ENCODE measurements at regions of chr1 and their contacts with region 1.

Region 1: GRCh38 chr1:155127105-155127964 is at the start of gene EFNA1:
- DNase-seq: peak; percentile 22 to 63 (median 42)
- H3K4me3 ChIP-seq: peak within 1 kb of the TSS; percentile 64
- H3K4me3 Mint-ChIP-seq: peak within 1 kb of the TSS; percentile 78 to 93 (median 89)
- H3K27ac ChIP-seq: peak within 1 kb of the TSS; percentile 55
- H3K27ac Mint-ChIP-seq: peak within 1 kb of the TSS in 6 of 8 donors; percentile 13 to 77 (median 68)
- H3K4me1 ChIP-seq: peaks cover 34% of the 10 kb centered on the region
- H3K4me1 Mint-ChIP-seq: peaks cover 23 to 30% (median 23%) of the 10 kb centered on the region in 3 donors
- H3K27me3 ChIP-seq: no peaks in the 10 kb centered on the region
- H3K27me3 Mint-ChIP-seq: peaks cover 16 to 34% of the 10 kb centered on the region in 2 donors
- total RNA-seq, gene EFNA1: 0.16 to 0.31 TPM

Region 2: DNA sequence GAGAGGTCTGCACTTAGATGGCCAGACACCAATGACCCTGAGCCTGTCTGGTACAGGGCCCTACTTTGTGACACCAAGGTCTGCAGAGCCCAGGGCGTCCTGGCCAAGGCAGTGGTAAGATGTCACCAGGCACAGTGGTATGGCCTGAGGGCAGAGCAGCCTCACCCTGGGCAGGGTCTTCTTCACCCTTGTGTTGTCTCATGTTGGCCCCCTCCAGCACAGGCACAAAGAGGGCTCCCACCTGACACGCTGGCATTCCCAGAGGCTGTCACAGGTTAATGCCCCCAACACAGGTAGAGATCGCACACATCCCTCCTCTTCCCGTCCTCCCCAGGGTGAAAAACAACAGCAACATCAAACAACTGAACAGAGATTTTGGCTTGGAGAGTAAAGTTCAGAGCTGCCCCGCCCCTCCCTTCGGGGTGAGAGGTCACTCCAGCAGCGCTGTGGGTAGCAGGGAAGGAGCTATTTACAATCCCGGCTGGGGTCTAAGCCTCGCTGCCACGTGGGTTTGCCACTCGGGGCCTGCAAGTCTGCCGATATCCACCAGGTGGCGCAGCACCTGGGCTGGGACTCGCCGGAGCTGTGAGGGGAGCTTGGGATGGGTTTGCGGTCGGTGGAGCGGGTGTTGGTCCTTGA is 36.1 kb before region 1 on chr1:
- CTCF ChIA-PET with region 1: interaction called, 12 read pairs
- POLR2A ChIA-PET with region 1: no interaction called
- DNase-seq: peak; percentile 69 to 84 (median 73)
- H3K4me3 ChIP-seq: no peak overlapping the region
- H3K4me3 Mint-ChIP-seq: no peak overlapping the region
- H3K27ac ChIP-seq: no peak overlapping the region
- H3K27ac Mint-ChIP-seq: peak overlapping the region in 1 of 8 donors; percentile 30
- H3K4me1 ChIP-seq: peaks cover 10% of the 10 kb centered on the region
- H3K4me1 Mint-ChIP-seq: peaks cover 4 to 8% (median 4%) of the 10 kb centered on the region in 3 donors
- H3K27me3 ChIP-seq: no peaks in the 10 kb centered on the region
- H3K27me3 Mint-ChIP-seq: peaks cover 1 to 5% of the 10 kb centered on the region in 2 donors

Region 3: DNA sequence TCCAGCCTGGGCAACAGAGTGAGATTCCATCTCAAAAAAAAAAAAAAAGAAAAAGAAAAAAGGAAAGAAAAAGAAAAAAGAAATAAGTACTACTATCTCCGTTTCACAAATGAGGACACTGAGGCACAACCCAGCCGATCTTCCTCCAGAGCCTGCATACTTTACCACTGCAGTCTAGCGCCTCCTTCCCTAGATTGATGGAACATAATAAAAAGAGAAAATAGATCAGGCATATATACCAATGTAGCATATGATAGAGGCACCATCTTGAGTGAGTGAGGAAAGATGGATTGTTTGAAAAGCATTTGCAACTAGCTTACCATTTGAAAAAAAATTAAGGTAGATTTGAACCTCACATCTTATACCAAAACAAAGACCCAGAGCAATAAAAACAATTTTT is 18.2 kb after region 1 on chr1:
- CTCF ChIA-PET with region 1: interaction called, 3 read pairs
- POLR2A ChIA-PET with region 1: interaction called, 10 read pairs
- DNase-seq: no peak
- H3K4me3 ChIP-seq: no peak overlapping the region
- H3K4me3 Mint-ChIP-seq: no peak overlapping the region
- H3K27ac ChIP-seq: no peak overlapping the region
- H3K27ac Mint-ChIP-seq: no peak overlapping the region
- H3K4me1 ChIP-seq: peaks cover 2% of the 10 kb centered on the region
- H3K4me1 Mint-ChIP-seq: peaks cover 2% of the 10 kb centered on the region in 3 donors
- H3K27me3 ChIP-seq: no peaks in the 10 kb centered on the region
- H3K27me3 Mint-ChIP-seq: peaks cover 33 to 43% of the 10 kb centered on the region in 2 donors